ENCODE measurements at regions of chr1 and their contacts with region 1.

Region 1: DNA sequence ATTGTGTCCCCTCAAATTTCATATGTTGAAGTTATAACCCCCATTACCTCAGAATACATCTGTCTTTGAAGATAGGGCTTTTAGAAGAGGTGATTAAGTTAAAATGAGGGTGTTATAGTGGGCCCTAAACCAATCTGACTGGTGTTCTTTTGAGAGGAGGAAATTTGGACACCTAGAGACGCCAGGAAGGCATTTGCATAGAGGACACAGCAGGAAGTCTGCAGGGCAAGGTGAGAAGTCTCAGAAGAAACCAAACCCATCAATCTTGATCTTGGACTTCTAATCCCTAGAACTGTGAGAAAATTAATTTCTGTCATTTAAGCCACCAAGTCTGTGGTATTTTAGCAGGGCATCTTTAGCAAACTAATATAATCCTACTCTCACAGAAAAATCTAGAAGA is 13.0 kb downstream of the GOLPH3L start:
- DNase-seq: peak in 2 of 35 experiments; percentile 2 to 40
- ATAC-seq: peak in 3 of 4 experiments; percentile 33 to 48 (median 46)
- H3K4me3 ChIP-seq: no peak overlapping the region
- H3K4me3 Mint-ChIP-seq: no peak overlapping the region
- H3K27ac ChIP-seq: no peak overlapping the region
- H3K27ac Mint-ChIP-seq: peak overlapping the region; percentile 60 to 80
- H3K4me1 ChIP-seq: peaks cover 4 to 10% of the 10 kb centered on the region in 2 experiments
- H3K4me1 Mint-ChIP-seq: peaks cover 21 to 23% (median 22%) of the 10 kb centered on the region in 3 donors
- H3K27me3 ChIP-seq: no peaks in the 10 kb centered on the region
- H3K27me3 Mint-ChIP-seq: no peaks in the 10 kb centered on the region

Region 2: DNA sequence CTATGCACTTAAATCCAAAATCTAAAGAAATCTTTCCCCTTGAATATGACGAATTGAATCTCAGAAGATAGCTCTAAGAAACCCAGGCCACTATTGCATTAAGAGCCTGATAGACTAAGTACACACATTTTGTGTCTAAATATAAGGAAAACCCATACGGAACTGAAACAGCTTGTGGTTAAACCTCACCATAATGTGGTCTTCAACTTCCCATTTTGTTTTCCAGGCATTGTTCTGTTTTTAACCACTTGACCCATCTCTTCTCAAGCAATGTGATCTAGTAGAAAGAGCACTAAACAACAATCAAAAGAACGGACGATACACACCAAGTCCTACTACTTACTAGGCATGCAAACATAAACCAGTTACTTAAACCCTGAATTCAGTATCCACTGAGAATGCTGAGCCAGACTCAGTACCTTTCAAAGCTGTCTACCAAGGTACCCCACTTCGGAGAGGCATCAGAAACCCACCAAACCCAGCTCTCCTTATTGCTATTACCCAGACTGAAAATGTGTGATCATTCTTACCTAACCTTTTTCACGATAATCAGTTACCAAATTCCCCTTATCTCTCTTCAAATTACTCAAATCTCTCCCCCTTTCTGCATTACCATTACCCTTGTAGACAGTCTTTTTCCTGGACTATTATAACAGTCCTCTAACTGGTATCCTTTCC is 686.2 kb before region 1 on chr1:
- CTCF ChIA-PET with region 1: no interaction called
- POLR2A ChIA-PET with region 1: interaction called in 1 of 2 experiments, 10 read pairs
- DNase-seq: peak in 1 of 35 experiments; percentile 2
- ATAC-seq: no peak
- H3K4me3 ChIP-seq: no peak overlapping the region
- H3K4me3 Mint-ChIP-seq: no peak overlapping the region
- H3K27ac ChIP-seq: no peak overlapping the region
- H3K27ac Mint-ChIP-seq: no peak overlapping the region
- H3K4me1 ChIP-seq: no peaks in the 10 kb centered on the region
- H3K4me1 Mint-ChIP-seq: peaks cover 17 to 27% (median 22%) of the 10 kb centered on the region in 3 donors
- H3K27me3 ChIP-seq: peaks cover 0 to 18% of the 10 kb centered on the region in 2 experiments
- H3K27me3 Mint-ChIP-seq: no peaks in the 10 kb centered on the region

Region 3: DNA sequence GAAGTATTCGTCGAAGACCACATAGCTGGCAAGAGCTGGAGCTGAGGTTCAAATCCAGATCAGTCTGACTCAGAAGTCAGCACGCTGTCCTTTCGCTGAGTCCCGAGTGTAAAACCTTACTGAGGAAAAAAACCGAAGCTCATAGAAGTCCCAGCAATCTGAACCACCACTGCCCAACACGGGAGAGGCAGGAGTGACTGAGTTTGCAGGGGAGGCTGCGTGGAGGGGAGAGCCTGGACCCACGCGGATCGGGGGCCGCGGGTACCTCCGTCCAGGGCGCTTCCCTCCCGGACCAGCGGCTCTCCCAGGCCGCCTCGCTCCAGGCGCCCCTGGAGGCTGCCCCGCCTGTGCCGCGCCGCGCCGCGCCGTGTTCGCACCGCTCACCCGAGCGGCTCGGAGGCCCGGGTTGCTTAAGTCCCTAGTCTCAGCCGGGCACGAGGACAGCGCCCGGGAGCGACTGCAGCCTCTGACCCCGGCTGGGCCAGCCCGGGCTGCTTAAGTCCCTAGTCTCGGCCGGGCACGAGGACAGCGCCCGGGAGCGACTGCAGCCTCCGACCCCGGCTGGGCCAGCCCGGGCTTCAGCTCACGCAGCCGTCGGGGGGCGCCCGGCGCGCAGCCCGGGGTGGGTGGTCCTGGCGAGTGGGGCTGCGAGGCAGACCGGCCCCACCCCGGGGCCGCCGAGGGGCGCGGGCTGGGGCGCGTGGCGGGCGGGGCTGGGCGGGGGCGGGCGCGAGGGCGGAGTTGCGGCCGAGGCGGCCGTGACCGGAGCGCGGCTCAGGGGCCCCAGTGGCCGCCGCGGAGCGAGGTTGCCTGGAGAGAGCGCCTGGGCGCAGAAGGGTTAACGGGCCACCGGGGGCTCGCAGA is 135.1 kb before region 1 on chr1 and contains the start of gene ADAMTSL4:
- CTCF ChIA-PET with region 1: no interaction called
- POLR2A ChIA-PET with region 1: no interaction called
- DNase-seq: peak in 6 of 35 experiments; percentile 26 to 59 (median 38)
- ATAC-seq: peak; percentile 76 to 83 (median 79)
- H3K4me3 ChIP-seq: peak within 1 kb of the TSS; percentile 40 to 64
- H3K4me3 Mint-ChIP-seq: peak within 1 kb of the TSS; percentile 73 to 80 (median 78)
- H3K27ac ChIP-seq: no peak within 1 kb of the TSS
- H3K27ac Mint-ChIP-seq: peak within 1 kb of the TSS in 1 of 2 donors; percentile 28
- H3K4me1 ChIP-seq: peaks cover 0 to 31% of the 10 kb centered on the region in 2 experiments
- H3K4me1 Mint-ChIP-seq: peaks cover 19 to 29% (median 26%) of the 10 kb centered on the region in 3 donors
- H3K27me3 ChIP-seq: peaks cover 0 to 74% of the 10 kb centered on the region in 2 experiments
- H3K27me3 Mint-ChIP-seq: peaks cover 7 to 29% of the 10 kb centered on the region in 2 donors
- total RNA-seq, gene ADAMTSL4: 0.26 to 0.66 (median 0.49) TPM

Region 4: DNA sequence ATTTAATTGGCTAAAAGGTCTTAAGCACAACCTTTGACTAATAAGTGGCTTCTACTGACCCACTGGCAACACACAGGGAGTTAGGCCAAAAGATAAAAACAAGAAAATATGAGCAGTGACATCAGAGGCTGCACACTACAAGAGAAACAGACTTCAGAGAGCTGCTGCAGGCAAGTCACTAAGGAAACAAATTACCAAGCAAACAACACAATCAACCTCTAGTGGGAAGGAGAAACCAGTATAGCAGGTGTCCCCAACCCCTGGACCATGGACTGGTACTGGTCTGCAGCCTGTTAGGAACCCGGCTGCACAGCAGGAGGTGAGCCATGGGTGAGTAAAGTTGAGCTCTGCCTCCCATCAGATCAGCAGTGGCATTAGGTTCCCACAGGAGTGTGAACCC is 33.7 kb before region 1 on chr1:
- CTCF ChIA-PET with region 1: interaction called in 1 of 2 experiments, 11 read pairs
- POLR2A ChIA-PET with region 1: no interaction called
- DNase-seq: no peak
- ATAC-seq: no peak
- H3K4me3 ChIP-seq: no peak overlapping the region
- H3K4me3 Mint-ChIP-seq: no peak overlapping the region
- H3K27ac ChIP-seq: no peak overlapping the region
- H3K27ac Mint-ChIP-seq: no peak overlapping the region
- H3K4me1 ChIP-seq: no peaks in the 10 kb centered on the region
- H3K4me1 Mint-ChIP-seq: peaks cover 0 to 3% (median 0%) of the 10 kb centered on the region in 3 donors
- H3K27me3 ChIP-seq: no peaks in the 10 kb centered on the region
- H3K27me3 Mint-ChIP-seq: no peaks in the 10 kb centered on the region

Measured in T-cell (primary cell).